GM12878 (cell line): ENCODE measurements at regions of chr3 and their contacts with region 1.

Region 1: GRCh38 chr3:58116161-58116955 is 94.4 kb downstream of the DNASE1L3 start:
- DNase-seq: peak; percentile 83
- ATAC-seq: peak; percentile 90
- H3K4me3 ChIP-seq: no peak overlapping the region
- H3K27ac ChIP-seq: peak overlapping the region; percentile 47
- H3K4me1 ChIP-seq: peaks cover 36% of the 10 kb centered on the region
- H3K27me3 ChIP-seq: no peaks in the 10 kb centered on the region
- CTCF ChIP-seq: no peak
- EP300 ChIP-seq: peak in 1 of 2 experiments; percentile 70; a peak in 1 of 4 replicates
- POLR2A ChIP-seq: no peak
- RAD21 ChIP-seq: no peak

Region 2: GRCh38 chr3:58013973-58014649 is 102.2 kb before region 1 on chr3:
- CTCF ChIA-PET with region 1: interaction called, 14 read pairs
- POLR2A ChIA-PET with region 1: interaction called, 6 read pairs
- RAD21 ChIA-PET with region 1: interaction called, 19 read pairs
- SMC1A ChIA-PET with region 1: interaction called, 34 read pairs
- in situ Hi-C with region 1: no loop called
- intact Hi-C with region 1: no loop called
- DNase-seq: no peak
- ATAC-seq: no peak
- H3K4me3 ChIP-seq: no peak overlapping the region
- H3K27ac ChIP-seq: no peak overlapping the region
- H3K4me1 ChIP-seq: peaks cover 16% of the 10 kb centered on the region
- H3K27me3 ChIP-seq: no peaks in the 10 kb centered on the region
- CTCF ChIP-seq: no peak
- EP300 ChIP-seq: no peak
- POLR2A ChIP-seq: no peak
- RAD21 ChIP-seq: no peak

Region 3: GRCh38 chr3:58025837-58026569 is 90.4 kb before region 1 on chr3:
- CTCF ChIA-PET with region 1: interaction called, 10 read pairs
- POLR2A ChIA-PET with region 1: no interaction called
- RAD21 ChIA-PET with region 1: interaction called, 4 read pairs
- SMC1A ChIA-PET with region 1: interaction called, 5 read pairs
- in situ Hi-C with region 1: no loop called
- intact Hi-C with region 1: no loop called
- DNase-seq: no peak
- ATAC-seq: no peak
- H3K4me3 ChIP-seq: no peak overlapping the region
- H3K27ac ChIP-seq: no peak overlapping the region
- H3K4me1 ChIP-seq: peaks cover 13% of the 10 kb centered on the region
- H3K27me3 ChIP-seq: no peaks in the 10 kb centered on the region
- CTCF ChIP-seq: no peak
- EP300 ChIP-seq: no peak
- POLR2A ChIP-seq: no peak
- RAD21 ChIP-seq: no peak

Region 4: GRCh38 chr3:58041654-58042324 is 74.6 kb before region 1 on chr3:
- CTCF ChIA-PET with region 1: interaction called, 4 read pairs
- POLR2A ChIA-PET with region 1: interaction called, 5 read pairs
- RAD21 ChIA-PET with region 1: interaction called, 23 read pairs
- SMC1A ChIA-PET with region 1: interaction called, 21 read pairs
- in situ Hi-C with region 1: no loop called
- intact Hi-C with region 1: loop called (anchors 5 kb)
- DNase-seq: peak; percentile 88
- ATAC-seq: peak; percentile 88
- H3K4me3 ChIP-seq: no peak overlapping the region
- H3K27ac ChIP-seq: peak overlapping the region; percentile 34; the same call in 1 of the 2 replicates
- H3K4me1 ChIP-seq: peaks cover 57% of the 10 kb centered on the region
- H3K27me3 ChIP-seq: no peaks in the 10 kb centered on the region
- CTCF ChIP-seq: no peak
- EP300 ChIP-seq: peak; percentile 72 to 86
- POLR2A ChIP-seq: no peak
- RAD21 ChIP-seq: no peak

Region 5: GRCh38 chr3:58084788-58085543 is 31.4 kb before region 1 on chr3:
- CTCF ChIA-PET with region 1: no interaction called
- POLR2A ChIA-PET with region 1: no interaction called
- RAD21 ChIA-PET with region 1: interaction called, 4 read pairs
- SMC1A ChIA-PET with region 1: interaction called, 11 read pairs
- in situ Hi-C with region 1: no loop called
- intact Hi-C with region 1: no loop called
- DNase-seq: peak; percentile 40
- ATAC-seq: peak; percentile 97
- H3K4me3 ChIP-seq: no peak overlapping the region
- H3K27ac ChIP-seq: peak overlapping the region; percentile 28; the same call in 1 of the 2 replicates
- H3K4me1 ChIP-seq: peaks cover 21% of the 10 kb centered on the region
- H3K27me3 ChIP-seq: no peaks in the 10 kb centered on the region
- CTCF ChIP-seq: no peak
- EP300 ChIP-seq: peak; percentile 12 to 53; a peak in 2 of 4 replicates
- POLR2A ChIP-seq: no peak
- RAD21 ChIP-seq: no peak